CD4-positive, alpha-beta memory T cell (primary cell): ENCODE measurements at regions of chr14 and their contacts with region 1.

Region 1: DNA sequence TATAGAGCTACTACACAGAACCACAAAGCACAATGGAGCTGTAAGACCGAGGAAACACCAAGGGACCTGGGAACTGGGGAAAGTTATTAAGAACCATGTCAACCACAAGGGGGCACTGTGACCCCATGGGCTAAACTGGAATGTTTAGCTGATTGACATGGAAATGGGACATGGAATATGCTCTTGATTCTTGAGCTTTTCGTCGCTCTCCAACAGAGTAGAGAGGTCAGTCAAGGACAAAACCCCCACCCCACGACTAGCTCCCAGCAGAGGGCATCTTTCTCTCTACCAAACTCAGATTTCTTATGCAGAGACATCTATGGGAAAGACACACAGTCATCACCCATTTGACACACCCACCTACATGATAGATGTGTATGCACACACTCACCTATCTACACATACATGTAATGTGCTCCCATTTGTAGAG is 10.1 kb downstream of the NDRG2 start:
- DNase-seq: peak; percentile 69 to 81 (median 76)
- H3K4me3 ChIP-seq: no peak overlapping the region
- H3K4me3 Mint-ChIP-seq: no peak overlapping the region
- H3K27ac ChIP-seq: no peak overlapping the region
- H3K27ac Mint-ChIP-seq: peak overlapping the region in 2 of 7 donors; percentile 63 to 72
- H3K4me1 ChIP-seq: no peaks in the 10 kb centered on the region
- H3K4me1 Mint-ChIP-seq: no peaks in the 10 kb centered on the region
- H3K27me3 ChIP-seq: peaks cover 5% of the 10 kb centered on the region
- H3K27me3 Mint-ChIP-seq: peaks cover 7 to 9% of the 10 kb centered on the region in 2 donors

Region 2: DNA sequence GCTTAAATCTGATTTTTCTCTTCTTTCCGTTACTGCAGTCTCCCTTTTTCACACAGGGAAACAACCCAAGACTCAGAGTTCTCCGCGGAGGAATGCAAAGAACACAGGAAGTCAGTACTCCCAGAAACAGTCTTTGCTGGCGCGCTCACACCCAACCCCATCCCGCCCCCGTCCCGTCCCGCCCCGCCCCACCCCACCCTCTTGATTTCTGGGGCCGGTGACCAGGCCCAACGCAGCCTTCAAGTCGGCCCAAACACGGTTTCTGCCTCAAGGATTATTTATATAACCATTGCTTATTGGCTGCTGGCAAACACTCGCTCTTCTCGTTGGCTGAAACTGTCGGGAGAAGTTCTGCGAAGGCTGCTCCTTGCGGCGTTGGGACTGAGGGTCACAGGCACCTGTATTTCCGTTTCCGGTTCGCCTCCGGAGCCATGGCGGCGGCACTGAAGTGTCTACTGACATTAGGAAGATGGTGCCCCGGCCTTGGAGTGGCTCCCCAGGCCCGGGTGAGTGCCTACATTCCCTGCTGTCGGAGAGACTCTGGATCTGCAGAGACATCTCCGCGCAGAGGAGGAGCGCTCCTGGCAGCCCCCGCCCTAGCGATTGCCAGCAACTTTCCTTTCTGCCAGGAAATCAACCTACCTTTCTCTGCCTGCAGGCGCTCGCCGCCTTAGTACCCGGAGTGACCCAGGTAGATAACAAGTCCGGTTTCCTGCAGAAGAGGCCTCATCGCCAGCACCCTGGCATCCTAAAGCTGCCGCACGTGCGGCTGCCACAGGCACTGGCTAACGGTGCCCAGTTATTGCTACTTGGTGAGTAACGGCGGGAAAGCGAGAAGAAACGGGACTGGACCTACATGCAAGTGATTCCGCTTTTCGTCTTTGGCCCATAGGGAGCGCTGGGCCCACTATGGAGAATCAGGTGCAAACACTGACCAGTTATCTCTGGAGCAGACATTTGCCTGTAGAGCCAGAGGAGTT is 24.9 kb before region 1 on chr14 and contains the start of gene METTL17:
- CTCF ChIA-PET with region 1: interaction called, 10 read pairs
- POLR2A ChIA-PET with region 1: no interaction called
- intact Hi-C with region 1: no loop called
- DNase-seq: peak; percentile 82 to 90 (median 85)
- H3K4me3 ChIP-seq: peak within 1 kb of the TSS; percentile 79 to 93
- H3K4me3 Mint-ChIP-seq: peak within 1 kb of the TSS; percentile 90 to 97 (median 96)
- H3K27ac ChIP-seq: peak within 1 kb of the TSS; percentile 73
- H3K27ac Mint-ChIP-seq: peak within 1 kb of the TSS; percentile 87 to 98 (median 96)
- H3K4me1 ChIP-seq: peaks cover 24% of the 10 kb centered on the region
- H3K4me1 Mint-ChIP-seq: peaks cover 15 to 39% (median 22%) of the 10 kb centered on the region in 4 donors
- H3K27me3 ChIP-seq: no peaks in the 10 kb centered on the region
- H3K27me3 Mint-ChIP-seq: no peaks in the 10 kb centered on the region
- total RNA-seq, gene METTL17: 119 to 125 TPM

Region 3: GRCh38 chr14:21024585-21025370 is 10.0 kb after region 1 on chr14 and contains the start of gene NDRG2:
- CTCF ChIA-PET with region 1: interaction called, 138 read pairs
- POLR2A ChIA-PET with region 1: interaction called, 18 read pairs
- intact Hi-C with region 1: no loop called
- DNase-seq: peak; percentile 71 to 79 (median 72)
- H3K4me3 ChIP-seq: peak within 1 kb of the TSS; percentile 69 to 77
- H3K4me3 Mint-ChIP-seq: peak within 1 kb of the TSS; percentile 83 to 95 (median 91)
- H3K27ac ChIP-seq: peak within 1 kb of the TSS; percentile 51
- H3K27ac Mint-ChIP-seq: peak within 1 kb of the TSS; percentile 77 to 93 (median 92)
- H3K4me1 ChIP-seq: peaks cover 20% of the 10 kb centered on the region
- H3K4me1 Mint-ChIP-seq: peaks cover 12 to 33% (median 22%) of the 10 kb centered on the region in 4 donors
- H3K27me3 ChIP-seq: no peaks in the 10 kb centered on the region
- H3K27me3 Mint-ChIP-seq: no peaks in the 10 kb centered on the region
- total RNA-seq, gene NDRG2: 31.9 to 32.4 TPM

Region 4: DNA sequence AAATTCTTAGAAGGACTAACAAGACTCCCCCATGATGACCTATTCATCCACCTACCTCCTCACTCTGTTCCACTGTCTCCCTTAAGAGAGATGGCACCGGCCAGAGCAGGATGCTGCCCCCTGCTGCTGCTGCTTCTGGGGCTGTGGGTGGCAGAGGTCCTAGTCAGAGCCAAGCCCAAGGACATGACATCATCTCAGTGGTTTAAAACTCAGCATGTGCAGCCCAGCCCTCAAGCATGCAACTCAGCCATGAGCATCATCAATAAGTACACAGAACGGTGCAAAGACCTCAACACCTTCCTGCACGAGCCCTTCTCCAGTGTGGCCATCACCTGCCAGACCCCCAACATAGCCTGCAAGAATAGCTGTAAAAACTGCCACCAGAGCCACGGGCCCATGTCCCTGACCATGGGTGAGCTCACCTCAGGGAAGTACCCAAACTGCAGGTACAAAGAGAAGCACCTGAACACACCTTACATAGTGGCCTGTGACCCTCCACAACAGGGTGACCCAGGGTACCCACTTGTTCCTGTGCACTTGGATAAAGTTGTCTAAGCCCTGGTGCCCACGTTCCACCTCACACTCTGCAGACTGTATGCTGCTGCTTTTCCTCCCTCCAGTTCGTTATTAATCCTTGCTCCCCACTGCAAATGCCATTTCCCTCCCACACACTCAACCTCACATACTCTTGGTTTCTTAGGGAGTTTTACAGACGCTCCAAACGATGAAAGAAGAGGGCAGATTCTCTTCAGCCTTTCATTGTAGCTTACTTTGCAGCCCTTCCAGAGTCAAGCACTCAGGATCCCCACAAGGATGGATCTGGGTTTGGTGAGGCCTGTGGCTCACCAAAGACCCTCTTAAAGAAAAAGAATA is 43.3 kb after region 1 on chr14 and contains the start of gene RNASE8:
- CTCF ChIA-PET with region 1: interaction called, 22 read pairs
- POLR2A ChIA-PET with region 1: no interaction called
- intact Hi-C with region 1: no loop called
- DNase-seq: no peak
- H3K4me3 ChIP-seq: no peak within 1 kb of the TSS
- H3K4me3 Mint-ChIP-seq: no peak within 1 kb of the TSS
- H3K27ac ChIP-seq: no peak within 1 kb of the TSS
- H3K27ac Mint-ChIP-seq: peak within 1 kb of the TSS in 1 of 7 donors; percentile 65
- H3K4me1 ChIP-seq: no peaks in the 10 kb centered on the region
- H3K4me1 Mint-ChIP-seq: peaks cover 0 to 4% (median under 1%) of the 10 kb centered on the region in 4 donors
- H3K27me3 ChIP-seq: no peaks in the 10 kb centered on the region
- H3K27me3 Mint-ChIP-seq: peaks cover 18 to 20% of the 10 kb centered on the region in 2 donors
- total RNA-seq, gene RNASE8: not detected

Region 5: GRCh38 chr14:21084988-21085853 is 70.4 kb after region 1 on chr14:
- CTCF ChIA-PET with region 1: interaction called, 74 read pairs
- POLR2A ChIA-PET with region 1: interaction called, 11 read pairs
- intact Hi-C with region 1: no loop called
- DNase-seq: no peak
- H3K4me3 ChIP-seq: no peak overlapping the region
- H3K4me3 Mint-ChIP-seq: peak overlapping the region in 1 of 8 donors; percentile 46
- H3K27ac ChIP-seq: no peak overlapping the region
- H3K27ac Mint-ChIP-seq: peak overlapping the region; percentile 62 to 100 (median 99)
- H3K4me1 ChIP-seq: peaks cover 18% of the 10 kb centered on the region
- H3K4me1 Mint-ChIP-seq: peaks cover 20 to 36% (median 28%) of the 10 kb centered on the region in 4 donors
- H3K27me3 ChIP-seq: no peaks in the 10 kb centered on the region
- H3K27me3 Mint-ChIP-seq: peaks cover 0 to 1% of the 10 kb centered on the region in 2 donors

Region 6: GRCh38 chr14:21136024-21136423 is 121.2 kb after region 1 on chr14:
- CTCF ChIA-PET with region 1: interaction called, 10 read pairs
- POLR2A ChIA-PET with region 1: no interaction called
- intact Hi-C with region 1: loop called (anchors 1 kb)
- DNase-seq: peak in 4 of 5 donors; percentile 2 to 8 (median 4)
- H3K4me3 ChIP-seq: no peak overlapping the region
- H3K4me3 Mint-ChIP-seq: no peak overlapping the region
- H3K27ac ChIP-seq: no peak overlapping the region
- H3K27ac Mint-ChIP-seq: no peak overlapping the region
- H3K4me1 ChIP-seq: no peaks in the 10 kb centered on the region
- H3K4me1 Mint-ChIP-seq: no peaks in the 10 kb centered on the region
- H3K27me3 ChIP-seq: no peaks in the 10 kb centered on the region
- H3K27me3 Mint-ChIP-seq: peaks cover 2 to 3% of the 10 kb centered on the region in 2 donors

Region 7: GRCh38 chr14:21163871-21164291 is 149.1 kb after region 1 on chr14:
- CTCF ChIA-PET with region 1: no interaction called
- POLR2A ChIA-PET with region 1: no interaction called
- intact Hi-C with region 1: no loop called
- DNase-seq: no peak
- H3K4me3 ChIP-seq: no peak overlapping the region
- H3K4me3 Mint-ChIP-seq: no peak overlapping the region
- H3K27ac ChIP-seq: no peak overlapping the region
- H3K27ac Mint-ChIP-seq: no peak overlapping the region
- H3K4me1 ChIP-seq: no peaks in the 10 kb centered on the region
- H3K4me1 Mint-ChIP-seq: peaks cover 0 to 1% (median 0%) of the 10 kb centered on the region in 4 donors
- H3K27me3 ChIP-seq: peaks cover 10% of the 10 kb centered on the region
- H3K27me3 Mint-ChIP-seq: peaks cover 19 to 39% of the 10 kb centered on the region in 2 donors